HepG2 (cell line): ENCODE measurements at regions of chr20 and their contacts with region 1.

Region 1: DNA sequence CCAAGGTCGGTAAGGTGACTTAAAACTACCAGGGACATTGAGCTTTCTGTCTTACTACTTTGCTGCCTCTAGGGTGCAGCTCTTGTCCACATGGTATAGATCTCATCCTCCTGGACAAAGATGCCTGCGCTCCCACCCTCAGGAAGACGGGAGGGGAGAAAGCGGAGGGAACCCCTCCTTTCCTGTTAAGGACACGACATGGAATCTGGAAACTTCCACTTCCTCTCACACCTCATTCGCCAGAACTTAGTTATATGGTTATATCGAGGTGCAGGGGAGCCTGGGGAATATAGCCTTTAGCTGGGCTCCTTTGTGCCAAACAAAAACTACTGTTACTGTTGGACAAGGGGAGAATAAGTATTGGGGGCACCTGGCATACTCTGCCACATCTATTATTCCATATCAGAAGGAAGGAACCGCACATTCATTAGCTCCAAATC is 224.3 kb upstream of the TSHZ2 start:
- DNase-seq: peak; percentile 37
- ATAC-seq: peak; percentile 97
- H3K4me3 ChIP-seq: no peak overlapping the region
- H3K27ac ChIP-seq: no peak overlapping the region
- H3K4me1 ChIP-seq: no peaks in the 10 kb centered on the region
- H3K27me3 ChIP-seq: no peaks in the 10 kb centered on the region
- CTCF ChIP-seq: peak; percentile 82
- EP300 ChIP-seq: no peak
- POLR2A ChIP-seq: no peak
- RAD21 ChIP-seq: peak; percentile 71

Region 2: GRCh38 chr20:52513828-52514227 is 234.0 kb before region 1 on chr20:
- CTCF ChIA-PET with region 1: no interaction called
- POLR2A ChIA-PET with region 1: no interaction called
- in situ Hi-C with region 1: no loop called
- intact Hi-C with region 1: no loop called
- DNase-seq: no peak
- ATAC-seq: no peak
- H3K4me3 ChIP-seq: no peak overlapping the region
- H3K27ac ChIP-seq: no peak overlapping the region
- H3K4me1 ChIP-seq: no peaks in the 10 kb centered on the region
- H3K27me3 ChIP-seq: no peaks in the 10 kb centered on the region
- CTCF ChIP-seq: no peak
- EP300 ChIP-seq: no peak
- POLR2A ChIP-seq: no peak
- RAD21 ChIP-seq: no peak

Region 3: GRCh38 chr20:52959125-52959524 is 211.3 kb after region 1 on chr20:
- CTCF ChIA-PET with region 1: no interaction called
- POLR2A ChIA-PET with region 1: no interaction called
- in situ Hi-C with region 1: no loop called
- intact Hi-C with region 1: loop called (anchors 1 kb)
- DNase-seq: peak; percentile 42
- ATAC-seq: peak; percentile 82
- H3K4me3 ChIP-seq: no peak overlapping the region
- H3K27ac ChIP-seq: no peak overlapping the region
- H3K4me1 ChIP-seq: no peaks in the 10 kb centered on the region
- H3K27me3 ChIP-seq: peaks cover 0 to 8% of the 10 kb centered on the region in 2 experiments; a peak in 1 of 5 replicates
- CTCF ChIP-seq: peak; percentile 70
- EP300 ChIP-seq: no peak
- POLR2A ChIP-seq: no peak
- RAD21 ChIP-seq: no peak

Region 4: GRCh38 chr20:53210931-53211330 is 463.1 kb after region 1 on chr20:
- CTCF ChIA-PET with region 1: no interaction called
- POLR2A ChIA-PET with region 1: no interaction called
- in situ Hi-C with region 1: loop called (anchors 5 kb)
- intact Hi-C with region 1: no loop called
- DNase-seq: no peak
- ATAC-seq: no peak
- H3K4me3 ChIP-seq: no peak overlapping the region
- H3K27ac ChIP-seq: no peak overlapping the region
- H3K4me1 ChIP-seq: no peaks in the 10 kb centered on the region
- H3K27me3 ChIP-seq: peaks cover 0 to 2% of the 10 kb centered on the region in 2 experiments; a peak in 1 of 5 replicates
- CTCF ChIP-seq: no peak
- EP300 ChIP-seq: no peak
- POLR2A ChIP-seq: no peak
- RAD21 ChIP-seq: no peak